ENCODE measurements at regions of chr3 and their contacts with region 1.

Region 1: DNA sequence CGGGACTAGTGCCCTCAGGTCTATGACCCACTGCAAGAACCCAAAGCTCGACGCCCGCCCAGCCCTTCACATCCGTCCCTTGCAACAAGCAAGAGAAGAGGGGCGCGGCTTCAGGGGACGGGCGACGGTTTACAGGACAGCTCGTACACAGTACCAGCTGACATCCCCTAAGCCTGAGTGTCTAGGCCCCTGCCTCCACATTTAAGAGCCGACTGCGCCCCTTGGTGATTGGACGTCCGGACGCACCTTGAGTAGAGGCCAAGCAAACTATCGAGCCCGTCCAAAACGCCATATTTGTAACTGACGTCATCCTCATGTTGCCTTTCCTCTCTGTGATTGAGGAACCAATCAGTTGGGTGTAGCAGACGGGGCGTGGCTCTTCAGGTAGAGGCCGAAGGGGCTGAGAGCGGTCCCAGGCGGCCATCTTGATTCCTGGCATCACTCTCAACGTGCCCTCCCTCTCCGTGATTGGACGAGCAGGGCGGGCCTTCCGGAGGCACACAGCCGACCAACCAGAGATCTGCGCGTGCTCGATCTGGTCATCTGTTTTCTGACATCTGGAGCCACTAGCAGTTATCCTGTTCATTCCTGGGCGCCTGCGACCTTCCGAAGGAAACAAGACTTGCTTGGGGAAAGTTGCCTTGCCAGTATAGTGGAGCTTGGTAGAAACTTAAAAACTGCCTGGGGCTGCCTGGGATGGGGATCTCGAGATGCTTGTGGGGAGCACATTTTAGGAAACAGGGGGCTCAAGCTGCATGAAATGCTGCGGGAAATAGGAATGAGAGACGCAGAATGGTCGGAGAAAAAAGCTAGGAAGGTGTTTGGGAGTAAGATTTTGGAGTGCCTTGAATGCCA is 4.0 kb upstream of the RPL14 start:
- DNase-seq: peak; percentile 98
- H3K4me3 ChIP-seq: peak overlapping the region; percentile 72
- H3K27ac ChIP-seq: peak overlapping the region; percentile 64
- H3K4me1 ChIP-seq: peaks cover 26% of the 10 kb centered on the region
- CTCF ChIP-seq: no peak

Region 2: GRCh38 chr3:40309418-40309924 is 143.6 kb before region 1 on chr3 and contains the start of gene EIF1B:
- CTCF ChIA-PET with region 1: no interaction called
- POLR2A ChIA-PET with region 1: interaction called, 6 read pairs
- intact Hi-C with region 1: loop called (anchors 2 kb)
- DNase-seq: peak; percentile 97
- H3K4me3 ChIP-seq: peak within 1 kb of the TSS; percentile 76
- H3K27ac ChIP-seq: peak within 1 kb of the TSS; percentile 50
- H3K4me1 ChIP-seq: peaks cover 36% of the 10 kb centered on the region
- CTCF ChIP-seq: peak; percentile 86
- total RNA-seq, gene EIF1B: 14.0 and 14.5 TPM in 2 replicates

Region 3: GRCh38 chr3:40524568-40525285 is 71.6 kb after region 1 on chr3 and contains the start of gene ZNF621:
- CTCF ChIA-PET with region 1: no interaction called
- POLR2A ChIA-PET with region 1: interaction called, 7 read pairs
- intact Hi-C with region 1: loop called (anchors 1 kb)
- DNase-seq: peak; percentile 75
- H3K4me3 ChIP-seq: peak within 1 kb of the TSS; percentile 70
- H3K27ac ChIP-seq: no peak within 1 kb of the TSS
- H3K4me1 ChIP-seq: peaks cover 5% of the 10 kb centered on the region
- CTCF ChIP-seq: no peak
- total RNA-seq, gene ZNF621: 4.8 and 5.0 TPM in 2 replicates

Region 4: DNA sequence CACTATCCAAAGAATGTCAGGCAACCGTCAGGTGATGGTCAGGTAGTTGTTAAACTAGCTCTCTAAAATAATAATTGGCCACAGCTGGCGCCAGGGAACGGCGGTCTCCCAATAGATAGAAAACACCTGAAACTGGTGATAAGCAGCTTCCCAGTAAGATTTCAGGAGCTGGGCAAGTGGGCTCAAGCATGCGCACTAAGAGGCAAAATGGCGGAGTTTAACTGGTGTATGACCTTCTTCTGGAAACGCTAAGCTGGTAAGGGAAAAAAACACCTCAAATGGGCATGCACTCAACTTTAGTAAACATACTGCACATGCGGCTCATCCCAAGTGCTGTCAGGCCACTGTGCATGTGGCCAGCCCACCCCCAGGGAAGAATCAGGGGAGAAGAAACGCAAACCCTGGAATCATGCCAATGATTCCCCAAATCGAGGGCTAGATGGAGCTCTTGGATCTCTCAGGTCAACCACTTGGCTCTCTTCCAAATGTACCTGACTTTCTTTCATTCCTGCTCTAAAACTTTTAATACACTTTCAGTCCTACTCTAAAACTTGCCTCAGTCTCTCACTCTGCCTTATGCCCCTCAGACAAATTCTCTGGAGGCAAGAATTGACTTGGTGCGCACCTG is 266.7 kb after region 1 on chr3:
- CTCF ChIA-PET with region 1: no interaction called
- POLR2A ChIA-PET with region 1: interaction called, 4 read pairs
- intact Hi-C with region 1: loop called (anchors 5 kb)
- DNase-seq: no peak
- H3K4me3 ChIP-seq: no peak overlapping the region
- H3K27ac ChIP-seq: no peak overlapping the region
- H3K4me1 ChIP-seq: peaks cover 58% of the 10 kb centered on the region
- CTCF ChIP-seq: 0 out of 2 replicates have a peak, but pooled peaks have one; percentile 18

Region 5: GRCh38 chr3:41198950-41199865 is 746.1 kb after region 1 on chr3 and contains the start of gene CTNNB1:
- CTCF ChIA-PET with region 1: no interaction called
- POLR2A ChIA-PET with region 1: no interaction called
- intact Hi-C with region 1: loop called (anchors 2 kb)
- DNase-seq: peak; percentile 95
- H3K4me3 ChIP-seq: peak within 1 kb of the TSS; percentile 99
- H3K27ac ChIP-seq: peak within 1 kb of the TSS; percentile 85
- H3K4me1 ChIP-seq: peaks cover 32% of the 10 kb centered on the region
- CTCF ChIP-seq: no peak
- total RNA-seq, gene CTNNB1: 201 and 237 TPM in 2 replicates

Region 6: DNA sequence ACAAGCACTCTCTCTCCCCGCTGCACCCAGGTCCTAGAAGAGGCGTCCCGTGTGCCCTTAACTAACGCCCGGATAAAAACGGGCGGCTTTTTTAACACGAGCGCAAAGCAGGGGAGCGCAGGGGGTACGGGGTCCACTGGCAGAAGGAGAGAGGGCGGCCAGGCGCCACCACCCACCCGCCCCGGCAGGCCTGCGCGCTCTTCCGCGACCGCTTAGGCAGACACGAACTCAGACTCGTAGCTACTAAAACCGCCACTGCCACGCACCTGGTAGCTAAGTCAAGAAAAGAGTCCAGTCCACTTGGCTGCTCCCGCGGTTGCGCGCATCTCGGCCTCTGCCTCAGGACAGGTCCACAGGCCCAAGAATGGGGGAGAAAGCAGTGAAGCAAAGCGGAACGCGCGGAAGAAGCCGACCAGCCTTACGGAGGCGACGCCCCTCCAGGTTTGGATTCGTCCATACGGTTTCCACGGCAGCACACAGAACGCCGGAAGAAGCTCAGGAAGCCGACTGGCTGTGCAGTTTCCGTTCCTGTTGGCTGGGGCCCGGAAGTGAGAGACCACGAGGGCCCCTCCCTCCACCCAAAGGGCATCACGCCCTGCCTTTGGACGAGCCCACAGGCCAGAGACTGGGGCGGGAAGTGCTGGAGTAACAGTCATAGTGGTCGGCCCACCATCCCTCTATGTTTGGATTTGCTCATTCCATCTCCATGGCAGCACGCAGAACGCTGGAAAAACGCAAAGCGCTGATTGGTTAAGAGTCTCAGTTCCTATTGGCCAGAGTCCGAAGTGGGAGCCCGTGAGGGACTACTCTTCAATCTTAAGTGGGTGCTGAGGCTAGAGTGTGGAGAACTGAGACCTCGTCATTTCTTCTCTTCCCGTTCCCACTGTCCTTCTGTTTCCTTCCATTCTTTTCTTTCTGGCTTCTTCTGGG is 1508.9 kb after region 1 on chr3 and contains the start of gene ULK4:
- CTCF ChIA-PET with region 1: no interaction called
- POLR2A ChIA-PET with region 1: no interaction called
- intact Hi-C with region 1: loop called (anchors 10 kb)
- DNase-seq: peak; percentile 100
- H3K4me3 ChIP-seq: peak within 1 kb of the TSS; percentile 93
- H3K27ac ChIP-seq: peak within 1 kb of the TSS; percentile 68
- H3K4me1 ChIP-seq: peaks cover 12% of the 10 kb centered on the region
- CTCF ChIP-seq: no peak
- total RNA-seq, gene ULK4: 21.0 and 39.3 TPM in 2 replicates